ENCODE measurements at regions of chr12 and their contacts with region 1.

Region 1: GRCh38 chr12:93137656-93138612 is 208.8 kb upstream of the EEA1 start:
- DNase-seq: peak; percentile 42
- CTCF ChIP-seq: no peak

Region 2: GRCh38 chr12:93085383-93086287 is 52.3 kb before region 1 on chr12:
- CTCF ChIA-PET with region 1: no interaction called
- POLR2A ChIA-PET with region 1: no interaction called
- DNase-seq: no peak
- CTCF ChIP-seq: no peak

Region 3: GRCh38 chr12:93109551-93110203 is 28.3 kb before region 1 on chr12:
- CTCF ChIA-PET with region 1: interaction called, 22 read pairs
- POLR2A ChIA-PET with region 1: no interaction called
- DNase-seq: peak; percentile 36
- CTCF ChIP-seq: no peak

Region 4: DNA sequence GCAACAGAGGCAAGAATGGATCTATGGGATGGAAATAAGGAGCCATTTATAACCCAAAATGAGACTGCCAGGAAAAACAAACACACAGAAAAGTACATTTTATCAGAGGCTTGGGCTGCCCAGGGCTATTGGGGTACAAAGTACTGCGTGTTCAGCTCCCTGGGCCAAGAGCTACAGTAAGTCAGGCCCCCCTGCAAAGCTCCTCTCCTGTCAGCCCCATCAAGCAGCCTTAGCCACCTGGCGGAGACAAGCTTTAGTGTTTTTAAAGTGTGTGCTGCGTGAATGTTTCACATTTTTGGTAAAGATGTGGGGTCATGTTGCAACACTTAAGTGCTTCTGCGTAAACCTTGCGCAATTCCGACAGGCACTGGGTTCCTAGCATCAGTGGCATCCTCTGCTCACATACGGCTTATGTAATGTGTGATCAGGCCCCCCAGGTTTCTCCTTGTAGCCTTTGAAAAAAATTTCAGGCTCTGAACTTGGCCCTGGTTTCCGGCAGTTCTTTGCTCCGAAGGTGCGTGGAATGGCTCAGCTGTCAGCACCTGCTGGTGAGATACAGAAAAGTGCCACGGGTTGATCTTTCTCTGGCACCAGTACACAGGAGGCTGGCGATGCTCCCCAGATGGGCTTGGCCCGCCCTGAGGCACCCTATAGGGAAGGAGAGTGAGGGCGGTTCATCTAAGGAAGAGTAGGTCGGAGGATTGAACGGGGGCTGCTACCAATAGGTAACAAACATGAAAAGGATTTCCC is 10.2 kb before region 1 on chr12:
- CTCF ChIA-PET with region 1: interaction called, 11 read pairs
- POLR2A ChIA-PET with region 1: no interaction called
- DNase-seq: no peak
- CTCF ChIP-seq: no peak

Region 5: DNA sequence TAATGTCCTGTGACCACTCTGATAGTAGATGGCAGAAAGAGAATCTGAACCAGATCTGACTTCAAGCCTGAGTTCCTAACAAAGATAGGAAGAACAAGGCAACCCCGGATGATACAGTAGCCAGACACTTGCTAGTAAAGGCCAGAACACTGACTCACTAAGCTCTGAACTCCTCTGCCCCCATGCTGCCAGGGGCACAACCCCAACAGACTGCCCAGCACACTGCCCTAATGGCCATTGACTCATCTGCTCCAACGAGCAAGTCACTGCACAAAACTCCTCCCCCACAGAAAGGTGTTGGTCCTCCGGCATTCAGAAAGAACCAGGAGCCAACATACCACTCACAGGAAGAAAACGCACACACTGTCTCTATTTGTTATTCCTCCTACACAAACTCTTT is 60.2 kb after region 1 on chr12:
- CTCF ChIA-PET with region 1: no interaction called
- POLR2A ChIA-PET with region 1: no interaction called
- DNase-seq: no peak
- CTCF ChIP-seq: no peak